HEK293 (cell line): ENCODE measurements at regions of chr5 and their contacts with region 1.

Region 1: DNA sequence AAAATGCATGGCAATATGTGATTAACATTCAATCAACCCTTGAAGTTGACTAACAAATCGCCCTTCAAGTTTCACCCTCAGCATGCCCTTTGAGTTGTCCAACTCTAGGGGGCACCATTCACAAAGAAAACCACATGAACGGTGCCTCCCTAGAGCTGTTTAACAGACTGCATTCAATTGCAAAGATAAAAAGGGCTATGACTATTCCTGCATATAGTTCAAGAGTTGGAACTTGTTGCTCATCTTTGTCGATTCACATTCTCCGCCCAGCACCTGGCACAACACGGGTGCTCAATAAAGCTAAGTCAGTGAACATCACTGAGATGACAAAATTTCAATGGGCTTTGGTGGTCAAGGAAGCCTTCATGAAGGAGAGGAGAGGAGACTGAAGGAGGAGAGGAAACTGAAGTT is 69.6 kb upstream of the SLC30A5 start:
- H3K4me3 ChIP-seq: no peak overlapping the region
- H3K27ac ChIP-seq: no peak overlapping the region
- H3K4me1 ChIP-seq: no peaks in the 10 kb centered on the region
- CTCF ChIP-seq: peak; percentile 60

Region 2: DNA sequence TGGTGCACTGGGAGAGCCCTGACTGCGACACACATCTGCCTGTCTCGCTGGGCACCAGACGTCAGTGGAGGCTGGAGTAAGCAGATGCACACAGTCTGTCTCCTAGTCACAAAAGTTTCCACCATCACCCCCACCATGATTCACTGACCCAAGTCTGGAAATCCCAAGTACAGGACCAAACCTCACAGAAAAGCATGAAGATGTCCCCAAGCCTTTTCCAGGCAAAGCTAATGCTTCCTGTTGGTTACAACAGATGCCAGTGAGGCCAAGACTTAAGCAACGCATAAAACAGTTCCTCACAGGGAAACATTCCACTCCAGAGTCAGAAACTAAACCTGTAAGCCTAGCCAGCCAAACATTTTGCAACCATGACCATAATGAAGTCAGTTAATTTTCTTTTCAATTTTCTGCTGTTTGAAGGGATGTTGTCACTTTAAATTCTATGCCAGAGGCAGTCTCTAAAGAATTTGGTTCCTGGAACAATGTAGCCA is 189.7 kb before region 1 on chr5:
- CTCF ChIA-PET with region 1: no interaction called
- POLR2A ChIA-PET with region 1: no interaction called
- H3K4me3 ChIP-seq: no peak overlapping the region
- H3K27ac ChIP-seq: no peak overlapping the region
- H3K4me1 ChIP-seq: no peaks in the 10 kb centered on the region
- CTCF ChIP-seq: no peak

Region 3: GRCh38 chr5:68884883-68885282 is 139.4 kb before region 1 on chr5:
- CTCF ChIA-PET with region 1: no interaction called
- POLR2A ChIA-PET with region 1: no interaction called
- H3K4me3 ChIP-seq: no peak overlapping the region
- H3K27ac ChIP-seq: no peak overlapping the region
- H3K4me1 ChIP-seq: no peaks in the 10 kb centered on the region
- CTCF ChIP-seq: peak; percentile 12; the same call in 1 of the 2 replicates

Region 4: GRCh38 chr5:69007726-69008368 is 16.4 kb before region 1 on chr5:
- CTCF ChIA-PET with region 1: interaction called, 16 read pairs
- POLR2A ChIA-PET with region 1: no interaction called
- H3K4me3 ChIP-seq: no peak overlapping the region
- H3K27ac ChIP-seq: no peak overlapping the region
- H3K4me1 ChIP-seq: 0 out of 2 replicates have a peak, but pooled peaks cover 2% of the 10 kb centered on the region
- CTCF ChIP-seq: peak; percentile 67; the same call in 1 of the 2 replicates

Region 5: DNA sequence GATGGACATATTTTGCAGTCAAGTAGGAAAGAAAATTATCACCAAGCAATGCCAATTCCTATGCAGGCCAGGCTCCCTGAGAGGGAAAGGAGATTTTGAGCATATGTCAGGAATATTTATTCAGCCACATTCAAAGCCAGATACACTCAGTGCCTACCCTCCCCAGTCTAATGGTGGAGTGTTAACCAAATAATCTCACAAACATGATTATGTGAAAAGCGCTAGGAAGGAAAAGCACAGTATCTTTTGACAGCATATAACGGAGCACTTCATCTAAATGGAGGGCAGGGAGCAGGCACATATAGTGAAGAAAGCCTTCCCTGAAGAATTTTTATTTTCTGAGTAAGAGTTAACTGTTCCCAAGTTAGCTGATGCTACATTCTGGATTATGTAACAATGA is 10.8 kb before region 1 on chr5:
- CTCF ChIA-PET with region 1: interaction called, 16 read pairs
- POLR2A ChIA-PET with region 1: no interaction called
- H3K4me3 ChIP-seq: no peak overlapping the region
- H3K27ac ChIP-seq: no peak overlapping the region
- H3K4me1 ChIP-seq: no peaks in the 10 kb centered on the region
- CTCF ChIP-seq: no peak

Region 6: DNA sequence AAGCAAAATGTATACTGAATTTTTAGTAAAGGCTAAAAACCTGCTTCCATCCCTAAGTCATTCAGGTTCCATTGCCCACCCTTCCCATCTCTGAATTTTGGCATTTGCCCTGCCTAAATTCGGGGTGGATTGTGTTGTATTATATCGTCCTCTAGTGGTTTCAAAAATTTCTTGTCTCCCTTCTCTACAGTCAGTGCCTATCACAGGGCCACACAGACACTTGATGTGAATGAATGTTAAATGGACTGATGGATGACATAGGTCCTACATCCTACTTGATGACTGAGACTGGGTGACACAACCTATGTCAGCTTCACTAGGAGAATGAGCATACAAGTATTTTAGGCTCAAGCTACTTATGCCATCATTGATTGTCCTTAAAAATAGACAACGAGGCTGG is 24.0 kb after region 1 on chr5:
- CTCF ChIA-PET with region 1: interaction called, 39 read pairs
- POLR2A ChIA-PET with region 1: no interaction called
- H3K4me3 ChIP-seq: no peak overlapping the region
- H3K27ac ChIP-seq: no peak overlapping the region
- H3K4me1 ChIP-seq: no peaks in the 10 kb centered on the region
- CTCF ChIP-seq: peak; percentile 88

Region 7: GRCh38 chr5:69083412-69083811 is 59.2 kb after region 1 on chr5:
- CTCF ChIA-PET with region 1: interaction called, 26 read pairs
- POLR2A ChIA-PET with region 1: no interaction called
- H3K4me3 ChIP-seq: no peak overlapping the region
- H3K27ac ChIP-seq: no peak overlapping the region
- H3K4me1 ChIP-seq: no peaks in the 10 kb centered on the region
- CTCF ChIP-seq: peak; percentile 39; the same call in 1 of the 2 replicates